ENCODE measurements at regions of chr2 and their contacts with region 1.

Region 1: GRCh38 chr2:235300368-235301201 is 193.3 kb upstream of the AGAP1 start:
- DNase-seq: no peak
- H3K4me3 ChIP-seq: no peak overlapping the region
- CTCF ChIP-seq: no peak
- POLR2A ChIP-seq: no peak

Region 2: GRCh38 chr2:233384811-233385488 is 1915.6 kb before region 1 on chr2:
- intact Hi-C with region 1: loop called (anchors 5 kb)
- DNase-seq: no peak
- H3K4me3 ChIP-seq: no peak overlapping the region
- CTCF ChIP-seq: no peak
- POLR2A ChIP-seq: no peak

Region 3: DNA sequence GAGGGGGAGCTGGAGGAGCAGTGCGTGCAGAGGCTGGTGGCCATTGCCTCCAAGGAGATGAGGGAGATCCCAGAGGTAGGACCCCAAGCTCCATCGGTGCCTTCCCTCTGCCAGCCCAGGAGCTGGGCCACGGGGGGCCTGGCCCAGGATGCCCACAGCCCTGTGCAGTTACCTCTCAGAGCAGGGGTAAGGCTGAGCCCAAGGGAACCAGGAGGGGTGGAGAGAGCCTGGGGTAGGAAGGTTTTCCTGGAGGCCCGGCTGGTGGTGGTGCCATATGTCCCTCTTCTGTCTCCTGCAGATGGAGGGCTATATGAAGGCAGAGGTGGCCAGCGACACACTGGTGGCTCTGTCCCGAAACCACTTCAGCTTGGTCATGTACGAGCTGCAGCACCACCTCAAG is 1511.0 kb before region 1 on chr2:
- intact Hi-C with region 1: loop called (anchors 10 kb)
- DNase-seq: no peak
- H3K4me3 ChIP-seq: no peak overlapping the region
- CTCF ChIP-seq: no peak
- POLR2A ChIP-seq: no peak

Region 4: GRCh38 chr2:235358981-235359471 is 58.4 kb after region 1 on chr2:
- intact Hi-C with region 1: no loop called
- DNase-seq: peak in 1 of 2 donors; percentile 75
- H3K4me3 ChIP-seq: no peak overlapping the region
- CTCF ChIP-seq: no peak
- POLR2A ChIP-seq: no peak

Region 5: GRCh38 chr2:236498369-236498768 is 1197.8 kb after region 1 on chr2:
- intact Hi-C with region 1: no loop called
- DNase-seq: no peak
- H3K4me3 ChIP-seq: no peak overlapping the region
- CTCF ChIP-seq: no peak
- POLR2A ChIP-seq: no peak

Measured in lower leg skin (tissue), 4 donors.